Ovary (tissue), 10 donors: ENCODE measurements at regions of chr14 and their contacts with region 1.

Region 1: DNA sequence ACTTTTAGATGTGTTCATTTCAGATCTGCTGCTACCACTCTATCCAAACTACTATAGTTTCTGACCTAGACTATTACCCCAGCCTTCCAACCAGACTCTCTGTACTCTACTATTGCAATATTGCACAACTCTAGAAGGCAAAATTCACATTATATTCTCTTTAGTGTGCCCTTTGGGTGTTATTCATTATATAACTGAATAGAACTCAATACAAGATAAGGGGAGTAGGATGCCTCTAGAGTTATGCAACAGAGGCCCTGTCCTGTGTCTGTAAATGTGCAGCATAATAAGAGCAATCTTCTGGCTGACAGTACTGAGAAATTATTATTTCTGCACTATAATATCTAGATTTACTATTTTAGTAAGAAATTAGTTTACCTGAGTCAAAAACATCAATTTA is 63.1 kb downstream of the LRRC9 start:
- DNase-seq: no peak
- H3K4me3 ChIP-seq: no peak overlapping the region
- H3K27ac ChIP-seq: no peak overlapping the region
- H3K4me1 ChIP-seq: no peaks in the 10 kb centered on the region
- H3K27me3 ChIP-seq: no peaks in the 10 kb centered on the region
- CTCF ChIP-seq: no peak
- EP300 ChIP-seq: no peak
- POLR2A ChIP-seq: no peak

Region 2: DNA sequence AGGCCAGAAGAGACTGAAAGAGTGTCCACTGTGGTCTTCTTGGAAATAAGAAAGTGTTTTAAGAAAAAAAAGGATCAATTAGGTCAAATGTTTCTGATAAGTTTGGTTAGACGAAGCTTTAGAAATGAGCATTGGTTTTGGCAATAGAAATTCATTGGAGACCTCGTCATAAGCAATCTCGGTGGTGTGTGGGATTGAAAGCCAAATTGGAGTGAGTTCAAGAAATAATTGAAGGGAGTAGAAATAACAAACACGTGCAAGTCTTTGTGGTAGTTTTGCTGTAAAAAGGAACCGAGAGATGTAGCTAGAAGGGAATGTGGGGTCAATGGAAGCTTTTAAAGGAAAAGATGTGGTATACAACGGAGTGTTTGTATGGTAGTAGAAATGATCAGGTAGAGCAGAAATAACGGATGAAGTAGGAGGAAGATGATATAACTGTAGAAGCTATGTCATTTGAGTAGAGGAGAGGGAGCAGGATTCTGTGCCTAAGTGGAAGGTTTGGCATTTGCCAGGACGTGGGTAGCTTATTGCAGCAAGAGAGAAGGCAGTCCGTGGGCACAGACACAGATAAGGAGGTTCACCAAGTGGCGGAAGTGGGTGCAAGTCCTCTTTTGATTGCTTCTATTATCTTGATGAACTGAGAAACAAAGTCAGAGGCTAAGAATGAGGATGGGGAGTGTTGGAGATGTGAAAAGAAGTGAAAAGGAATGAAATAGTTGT is 1199.1 kb before region 1 on chr14:
- intact Hi-C with region 1: loop called in 1 of 4 experiments (anchors 5 kb)
- DNase-seq: no peak
- H3K4me3 ChIP-seq: no peak overlapping the region
- H3K27ac ChIP-seq: no peak overlapping the region
- H3K4me1 ChIP-seq: no peaks in the 10 kb centered on the region
- H3K27me3 ChIP-seq: no peaks in the 10 kb centered on the region
- CTCF ChIP-seq: no peak
- EP300 ChIP-seq: no peak
- POLR2A ChIP-seq: no peak